ENCODE measurements at regions of chr2 and their contacts with region 1.

Region 1: GRCh38 chr2:235194351-235194750 is 242.5 kb downstream of the SH3BP4 start:
- DNase-seq: peak in 2 of 10 donors; percentile 33 to 45
- H3K4me3 ChIP-seq: no peak overlapping the region
- H3K27ac ChIP-seq: peak overlapping the region; percentile 18 to 95 (median 85)
- H3K27me3 ChIP-seq: peaks cover 0 to 6% (median 0%) of the 10 kb centered on the region in 45 donors
- CTCF ChIP-seq: peak in 1 of 56 donors; percentile 5

Region 2: GRCh38 chr2:234863043-234863934 is 331.1 kb before region 1 on chr2:
- intact Hi-C with region 1: no loop called
- DNase-seq: peak in 8 of 10 donors; percentile 27 to 63 (median 47)
- H3K4me3 ChIP-seq: no peak overlapping the region
- H3K27ac ChIP-seq: peak overlapping the region in 14 of 59 donors; percentile 5 to 62 (median 34)
- H3K27me3 ChIP-seq: no peaks in the 10 kb centered on the region
- CTCF ChIP-seq: no peak

Region 3: GRCh38 chr2:235149240-235149659 is 45.1 kb before region 1 on chr2:
- intact Hi-C with region 1: loop called (anchors 1 to 5 kb)
- DNase-seq: peak in 8 of 10 donors; percentile 36 to 78 (median 66)
- H3K4me3 ChIP-seq: peak overlapping the region in 6 of 59 donors; percentile 2 to 43 (median 14)
- H3K27ac ChIP-seq: peak overlapping the region in 55 of 59 donors; percentile 2 to 92 (median 81)
- H3K27me3 ChIP-seq: peaks cover 0 to 7% (median 0%) of the 10 kb centered on the region in 45 donors
- CTCF ChIP-seq: peak in 3 of 56 donors; percentile 11 to 13 (median 13)

Region 4: GRCh38 chr2:235230821-235231601 is 36.7 kb after region 1 on chr2:
- intact Hi-C with region 1: loop called in 1 of 2 experiments (anchors 5 kb)
- DNase-seq: no peak
- H3K4me3 ChIP-seq: no peak overlapping the region
- H3K27ac ChIP-seq: no peak overlapping the region
- H3K27me3 ChIP-seq: peaks cover 0 to 14% (median 0%) of the 10 kb centered on the region in 45 donors
- CTCF ChIP-seq: no peak